Left ventricle myocardium inferior (tissue), 1 donor: ENCODE measurements at regions of chr5 and their contacts with region 1.

Region 1: GRCh38 chr5:52948418-52949076 is 40.6 kb upstream of the ITGA2 start:
- DNase-seq: peak; percentile 16
- H3K4me3 ChIP-seq: no peak overlapping the region
- H3K27ac ChIP-seq: peak overlapping the region; percentile 37
- H3K4me1 ChIP-seq: peaks cover 34% of the 10 kb centered on the region
- H3K27me3 ChIP-seq: no peaks in the 10 kb centered on the region
- CTCF ChIP-seq: peak; percentile 82

Region 2: DNA sequence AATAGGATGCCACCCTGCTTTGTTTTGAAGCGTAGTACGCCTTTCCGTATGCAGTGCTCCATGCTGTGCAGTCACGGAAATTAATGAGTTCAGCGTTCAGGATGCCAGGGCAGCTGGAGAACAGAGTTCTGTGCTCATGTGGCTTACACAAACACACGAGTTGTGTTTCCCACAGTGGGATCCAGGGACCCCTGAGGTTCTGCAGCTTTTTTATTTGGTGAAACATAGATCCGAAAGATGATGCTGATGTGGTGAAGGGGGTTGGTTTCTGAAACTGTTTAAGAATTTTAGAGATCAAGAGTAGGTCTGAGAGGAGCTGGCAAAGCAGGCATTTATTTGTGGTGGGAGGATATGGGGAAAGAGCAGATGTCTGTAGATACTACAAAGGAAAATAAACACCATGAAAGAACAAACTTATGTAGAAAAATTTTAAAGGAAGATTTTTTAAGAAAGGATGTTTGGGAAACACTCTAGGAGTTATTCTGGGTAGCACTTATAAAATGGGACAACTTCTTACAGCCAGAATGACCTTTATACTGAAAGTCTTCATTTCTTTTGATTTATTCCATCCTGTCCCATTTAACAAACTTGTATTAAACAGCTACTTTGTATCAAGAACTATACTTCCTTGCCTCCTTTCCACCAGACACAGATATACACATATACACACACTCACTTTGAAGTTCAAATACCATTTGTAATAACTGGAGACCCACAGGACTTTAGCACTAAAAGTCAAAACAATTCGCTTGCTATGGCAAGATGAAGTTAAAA is 108.1 kb before region 1 on chr5:
- intact Hi-C with region 1: no loop called
- DNase-seq: no peak
- H3K4me3 ChIP-seq: no peak overlapping the region
- H3K27ac ChIP-seq: peak overlapping the region; percentile 64
- H3K4me1 ChIP-seq: peaks cover 50% of the 10 kb centered on the region
- H3K27me3 ChIP-seq: no peaks in the 10 kb centered on the region
- CTCF ChIP-seq: no peak

Region 3: DNA sequence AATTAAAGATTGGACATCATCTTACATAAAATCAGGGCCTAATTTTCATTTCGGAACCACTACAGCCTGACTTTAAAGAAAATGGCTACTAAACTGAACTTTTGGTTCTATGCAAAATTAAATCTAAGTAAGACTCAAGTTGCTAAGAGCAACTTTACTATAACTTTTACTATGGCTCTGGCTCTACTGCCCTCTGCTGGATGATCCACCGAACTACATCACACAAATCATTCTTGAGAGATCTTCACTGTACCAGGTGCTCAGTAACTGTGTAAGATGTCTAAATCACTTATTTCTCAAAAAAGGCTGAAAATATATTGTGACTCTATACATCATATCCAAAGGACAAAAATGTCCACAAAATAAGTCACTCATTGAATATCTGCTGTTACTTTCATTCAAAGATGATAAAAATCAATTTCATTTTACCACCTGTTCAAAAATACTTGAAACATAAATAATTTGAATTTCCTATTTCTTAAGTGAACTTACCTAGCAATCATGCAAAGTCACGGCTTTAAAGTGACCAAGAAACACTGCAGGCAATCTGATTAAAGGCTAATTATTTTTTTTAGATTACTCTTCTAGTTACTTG is 147.5 kb after region 1 on chr5:
- intact Hi-C with region 1: loop called (anchors 5 kb)
- DNase-seq: peak; percentile 18
- H3K4me3 ChIP-seq: no peak overlapping the region
- H3K27ac ChIP-seq: no peak overlapping the region
- H3K4me1 ChIP-seq: peaks cover 9% of the 10 kb centered on the region
- H3K27me3 ChIP-seq: no peaks in the 10 kb centered on the region
- CTCF ChIP-seq: peak; percentile 93